Activated naive CD4-positive, alpha-beta T cell treated with anti-CD3 and anti-CD28 coated beads for 36 hours (primary cell): ENCODE measurements at regions of chr4 and their contacts with region 1.

Region 1: DNA sequence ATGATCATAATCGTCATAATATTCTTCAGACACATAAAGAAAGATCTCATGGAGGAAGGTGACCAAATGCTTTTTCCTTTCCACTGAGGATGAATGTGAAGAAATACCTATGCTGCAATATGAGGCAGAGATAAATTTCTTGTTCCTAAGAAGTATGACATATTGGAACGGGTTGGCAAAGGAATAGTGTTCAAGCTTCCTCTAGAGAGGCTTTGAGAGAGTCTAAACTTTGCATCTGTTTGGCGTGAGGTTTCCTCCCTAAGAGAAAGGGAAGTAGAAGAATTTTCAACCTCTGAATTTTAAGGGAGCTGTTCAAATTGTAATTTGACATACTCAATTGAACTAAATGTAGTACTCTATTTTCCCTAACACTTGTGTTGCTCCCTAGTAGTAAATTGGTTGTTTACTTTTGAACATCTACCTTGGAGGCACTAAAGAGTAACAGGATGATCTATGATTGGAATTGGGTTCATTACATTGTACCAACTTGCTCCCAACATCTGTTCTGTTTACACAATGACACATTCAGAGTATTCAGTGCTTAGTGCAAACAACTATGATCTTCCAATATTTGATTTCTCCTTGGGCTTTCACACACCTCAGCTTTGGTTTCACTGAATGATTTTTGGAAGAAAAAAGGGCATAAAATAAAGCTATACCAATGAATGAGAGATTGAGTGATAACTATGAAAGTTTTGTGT is 122.0 kb downstream of the CORIN start:
- DNase-seq: no peak
- H3K4me3 Mint-ChIP-seq: no peak overlapping the region
- H3K27ac Mint-ChIP-seq: no peak overlapping the region
- H3K4me1 Mint-ChIP-seq: no peaks in the 10 kb centered on the region
- H3K27me3 Mint-ChIP-seq: peaks cover 17% of the 10 kb centered on the region

Region 2: DNA sequence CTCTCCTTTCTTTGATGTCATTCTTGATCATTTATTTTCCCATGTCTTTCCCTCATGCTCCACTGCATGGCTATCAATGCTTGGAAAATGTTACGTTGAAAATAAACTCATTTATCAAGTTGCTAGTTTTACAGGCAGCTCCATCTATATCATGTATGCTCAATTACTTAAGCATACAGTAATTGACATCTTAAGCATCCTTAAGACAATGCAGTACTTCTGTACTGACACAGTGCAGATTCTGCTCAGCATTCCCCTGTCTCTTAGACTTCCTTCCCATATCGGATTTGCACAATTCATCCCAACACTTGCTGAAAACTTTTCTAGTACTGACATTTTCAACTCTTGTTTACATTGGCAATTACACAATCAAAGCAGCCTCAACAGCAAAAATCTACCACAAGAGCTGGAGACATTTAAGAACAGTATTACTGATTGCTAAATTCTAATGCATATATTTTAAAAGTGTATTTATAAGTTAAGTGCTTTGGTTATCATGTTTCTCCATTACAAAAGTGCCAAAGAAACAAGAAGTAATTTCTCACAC is 65.2 kb before region 1 on chr4:
- CTCF ChIA-PET with region 1: no interaction called
- intact Hi-C with region 1: no loop called
- DNase-seq: no peak
- H3K4me3 Mint-ChIP-seq: no peak overlapping the region
- H3K27ac Mint-ChIP-seq: no peak overlapping the region
- H3K4me1 Mint-ChIP-seq: no peaks in the 10 kb centered on the region
- H3K27me3 Mint-ChIP-seq: peaks cover 4% of the 10 kb centered on the region

Region 3: DNA sequence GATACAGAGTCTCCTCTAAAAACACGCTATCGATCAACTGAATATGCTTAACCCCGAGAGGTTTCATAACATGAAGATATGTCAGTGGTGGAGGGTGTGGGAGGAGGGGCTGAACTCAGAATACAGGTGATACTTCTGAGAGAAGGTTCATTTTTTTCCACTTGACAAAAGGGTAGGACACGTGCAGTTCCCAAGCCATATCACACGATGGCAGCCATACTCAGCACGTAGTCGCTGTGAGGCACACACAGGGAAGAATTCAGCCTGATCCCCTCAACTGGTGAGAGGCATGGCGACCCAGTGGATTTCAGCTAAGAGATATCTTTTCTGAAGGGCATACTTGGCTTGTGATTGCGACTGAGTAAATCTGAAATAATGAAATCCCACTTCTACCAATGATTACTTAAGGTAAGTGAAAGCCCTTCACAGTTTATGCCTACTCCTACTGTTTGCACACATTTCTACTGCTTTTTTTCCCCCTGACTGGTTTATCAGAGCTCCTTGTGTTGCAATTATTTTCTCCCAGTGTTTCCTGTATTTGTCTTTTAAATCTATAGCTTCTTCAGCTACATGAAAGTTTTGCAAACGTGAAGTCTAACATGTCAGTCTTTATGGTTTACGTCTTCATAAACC is 11.1 kb before region 1 on chr4:
- CTCF ChIA-PET with region 1: interaction called, 19 read pairs
- intact Hi-C with region 1: no loop called
- DNase-seq: peak; percentile 37
- H3K4me3 Mint-ChIP-seq: no peak overlapping the region
- H3K27ac Mint-ChIP-seq: no peak overlapping the region
- H3K4me1 Mint-ChIP-seq: no peaks in the 10 kb centered on the region
- H3K27me3 Mint-ChIP-seq: peaks cover 15% of the 10 kb centered on the region